ENCODE measurements at regions of chr17 and their contacts with region 1.

Region 1: DNA sequence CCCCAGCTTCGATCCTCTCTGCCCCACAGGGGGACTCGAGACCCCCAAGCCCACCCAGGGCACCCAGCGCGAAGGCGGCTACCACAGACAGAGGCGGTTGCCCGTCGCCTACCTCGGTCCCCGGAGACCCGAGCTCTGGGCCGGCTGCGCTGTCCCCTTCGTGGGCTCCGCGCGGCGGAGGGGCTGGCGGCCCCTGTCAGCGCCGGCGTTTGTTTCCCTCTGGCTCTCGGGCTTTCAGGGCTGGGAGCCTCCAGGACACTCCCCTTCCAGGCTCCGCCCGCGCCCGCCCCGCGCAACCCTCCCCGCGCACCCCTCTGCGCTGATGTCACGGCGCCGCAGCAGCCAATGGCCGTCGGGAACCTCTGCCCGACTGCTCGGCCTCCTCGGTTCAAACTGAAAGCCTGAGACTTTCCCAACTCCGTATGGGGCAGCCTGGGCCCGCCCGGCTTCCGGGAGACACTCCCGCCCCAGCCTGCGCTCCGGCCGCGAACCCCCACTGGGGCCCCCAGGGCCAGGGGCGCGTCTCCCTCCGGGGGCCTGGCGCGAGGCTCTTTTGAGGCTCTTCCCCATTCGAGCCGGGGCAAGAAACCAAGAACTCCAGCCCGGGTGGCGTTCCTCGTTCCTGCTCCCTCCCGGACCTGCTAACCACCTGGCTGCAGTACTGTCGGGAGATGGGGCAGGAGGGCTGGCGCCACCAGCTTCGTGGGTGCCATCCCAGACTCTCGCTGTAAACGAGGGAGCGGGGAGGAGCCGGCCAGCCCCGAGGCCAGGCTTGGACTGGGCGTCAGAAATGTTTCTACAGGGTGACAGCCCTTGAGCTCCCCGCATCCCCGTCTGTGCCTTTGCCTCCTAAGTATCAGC is at the start of gene CDC42EP4:
- DNase-seq: peak; percentile 96 to 99 (median 98)
- ATAC-seq: peak; percentile 94 to 95
- H3K4me3 ChIP-seq: peak within 1 kb of the TSS; percentile 94
- H3K27ac ChIP-seq: peak within 1 kb of the TSS; percentile 97
- H3K4me1 ChIP-seq: peaks cover 10% of the 10 kb centered on the region
- H3K27me3 ChIP-seq: no peaks in the 10 kb centered on the region
- total RNA-seq, gene CDC42EP4: 28.1 to 47.1 (median 38.4) TPM

Region 2: DNA sequence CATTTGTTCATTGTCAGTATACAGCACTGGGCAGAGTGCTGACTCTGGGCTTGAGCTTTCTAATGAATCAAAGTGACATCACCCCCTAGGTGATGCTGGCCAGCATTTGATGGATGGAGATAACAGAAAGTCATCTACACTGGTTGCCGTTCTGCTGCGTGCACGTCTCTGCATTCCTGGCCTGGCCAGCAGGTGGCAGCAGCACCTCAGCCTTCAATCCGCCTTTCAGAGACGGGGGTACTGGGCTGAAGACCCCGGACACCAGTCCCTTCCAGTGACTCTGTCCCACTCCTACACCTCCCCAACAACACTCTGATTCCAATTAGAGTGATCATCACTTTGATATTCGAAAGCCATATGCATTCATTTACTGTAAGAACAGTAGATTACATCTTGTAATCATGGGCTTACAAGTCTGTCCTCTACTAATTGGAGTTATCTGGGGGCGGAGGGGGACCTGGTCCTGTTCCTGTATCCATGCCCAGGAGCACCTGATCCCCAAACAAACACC is 56.3 kb before region 1 on chr17:
- intact Hi-C with region 1: loop called in 1 of 4 experiments (anchors 2 kb)
- DNase-seq: peak; percentile 40 to 74 (median 72)
- ATAC-seq: peak; percentile 66 to 76
- H3K4me3 ChIP-seq: no peak overlapping the region
- H3K27ac ChIP-seq: no peak overlapping the region
- H3K4me1 ChIP-seq: no peaks in the 10 kb centered on the region
- H3K27me3 ChIP-seq: no peaks in the 10 kb centered on the region

Region 3: DNA sequence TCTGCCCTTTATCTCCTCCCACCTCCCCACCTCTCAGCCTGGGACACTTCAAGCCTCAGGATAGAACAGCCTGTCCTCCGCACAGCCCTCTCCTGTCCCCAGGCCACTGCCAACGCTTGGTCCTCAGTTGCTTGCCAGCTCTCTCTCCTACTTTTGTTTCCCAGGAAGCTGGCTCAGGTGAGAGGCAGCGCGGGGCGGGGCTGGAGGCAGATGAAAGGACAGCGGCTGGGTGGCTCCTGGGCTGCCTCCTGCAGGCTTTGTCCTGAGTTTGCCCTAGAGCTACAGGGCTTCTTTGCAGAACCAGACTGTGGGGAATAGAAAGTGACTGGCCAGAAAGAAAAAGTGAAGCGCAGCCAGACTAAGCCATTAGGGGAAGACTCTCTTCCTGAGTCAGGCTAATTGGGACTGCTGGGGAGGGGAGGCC is 48.0 kb after region 1 on chr17:
- intact Hi-C with region 1: loop called (anchors 5 to 10 kb)
- DNase-seq: peak in 2 of 3 donors; percentile 53 to 65
- ATAC-seq: peak; percentile 20 to 51
- H3K4me3 ChIP-seq: no peak overlapping the region
- H3K27ac ChIP-seq: no peak overlapping the region
- H3K4me1 ChIP-seq: peaks cover 7% of the 10 kb centered on the region
- H3K27me3 ChIP-seq: no peaks in the 10 kb centered on the region

Region 4: GRCh38 chr17:73365906-73366623 is 54.1 kb after region 1 on chr17:
- intact Hi-C with region 1: loop called (anchors 5 to 10 kb)
- DNase-seq: peak in 2 of 3 donors; percentile 64 to 79
- ATAC-seq: peak; percentile 57 to 69
- H3K4me3 ChIP-seq: no peak overlapping the region
- H3K27ac ChIP-seq: peak overlapping the region; percentile 43
- H3K4me1 ChIP-seq: no peaks in the 10 kb centered on the region
- H3K27me3 ChIP-seq: no peaks in the 10 kb centered on the region

Measured in right cardiac atrium (tissue), 5 donors.